KBM-7 (cell line): ENCODE measurements at regions of chr18 and their contacts with region 1.

Region 1: GRCh38 chr18:51029694-51030536 is at the start of gene SMAD4:
- DNase-seq: peak; percentile 96

Region 2: GRCh38 chr18:50545936-50546335 is 484.0 kb before region 1 on chr18:
- in situ Hi-C with region 1: no loop called
- DNase-seq: no peak

Region 3: GRCh38 chr18:50836521-50836957 is 193.4 kb before region 1 on chr18:
- in situ Hi-C with region 1: loop called (anchors 25 kb)
- DNase-seq: peak; percentile 73